Activated T-helper 2 cell treated with anti-CD3 and anti-CD28 coated beads, Interferon-gamma antibody, Interleukin-2, Interleukin-4, amounts not matched to agents 10 μg/mL and 5 μg/mL and 100 μg/mL, durations not matched to agents 14 hours and 24 hours and 36 hours (primary cell): ENCODE measurements at regions of chr2 and their contacts with region 1.

Region 1: GRCh38 chr2:12456293-12457151 is 260.2 kb upstream of the TRIB2 start:
- DNase-seq: peak; percentile 54
- H3K4me3 Mint-ChIP-seq: peak overlapping the region; percentile 61
- H3K27ac Mint-ChIP-seq: peak overlapping the region; percentile 74
- H3K4me1 Mint-ChIP-seq: peaks cover 42% of the 10 kb centered on the region
- H3K27me3 Mint-ChIP-seq: no peaks in the 10 kb centered on the region

Region 2: DNA sequence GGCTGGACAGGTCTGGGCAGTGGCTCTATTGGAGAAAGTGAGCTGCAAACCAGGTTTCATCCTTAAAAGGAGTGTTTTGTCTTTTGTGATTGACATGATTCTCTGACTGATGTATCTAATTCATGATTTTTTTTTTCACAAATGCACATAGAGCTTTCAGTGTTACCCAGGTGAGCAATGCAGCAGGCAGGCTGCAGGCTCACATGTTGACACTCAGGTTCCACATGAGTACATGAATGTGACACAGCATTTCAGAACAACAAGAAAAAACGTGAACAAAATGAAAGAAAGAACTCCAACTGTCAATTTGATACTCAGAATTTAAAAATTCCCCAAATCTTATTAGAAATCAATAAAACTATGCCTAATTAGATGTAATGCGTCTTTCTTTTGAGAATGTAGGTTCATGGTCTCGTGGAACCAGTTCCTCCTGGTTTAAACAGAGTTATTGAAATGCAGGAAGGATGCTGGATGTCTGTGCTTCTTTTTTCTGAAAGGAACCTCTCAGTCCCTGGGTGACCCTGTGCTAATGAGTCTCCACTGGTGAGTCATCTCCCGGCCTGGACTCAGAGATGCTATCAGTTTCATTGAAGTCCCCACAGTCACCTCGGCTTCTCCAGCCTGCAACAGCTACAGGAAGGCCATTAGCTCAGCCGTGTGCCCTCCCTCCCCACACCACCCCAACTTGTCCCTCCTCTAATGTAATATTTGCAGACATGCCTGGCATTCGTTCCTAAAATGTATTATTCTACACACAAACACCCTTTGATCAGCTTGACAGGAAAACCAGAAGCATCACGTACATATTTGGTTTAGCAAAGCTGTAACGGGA is 279.7 kb before region 1 on chr2:
- intact Hi-C with region 1: no loop called
- DNase-seq: no peak
- H3K4me3 Mint-ChIP-seq: no peak overlapping the region
- H3K27ac Mint-ChIP-seq: no peak overlapping the region
- H3K4me1 Mint-ChIP-seq: peaks cover 24% of the 10 kb centered on the region
- H3K27me3 Mint-ChIP-seq: peaks cover 14% of the 10 kb centered on the region

Region 3: GRCh38 chr2:12435430-12436222 is 20.9 kb before region 1 on chr2:
- intact Hi-C with region 1: loop called (anchors 2 kb)
- DNase-seq: no peak
- H3K4me3 Mint-ChIP-seq: no peak overlapping the region
- H3K27ac Mint-ChIP-seq: no peak overlapping the region
- H3K4me1 Mint-ChIP-seq: peaks cover 37% of the 10 kb centered on the region
- H3K27me3 Mint-ChIP-seq: no peaks in the 10 kb centered on the region

Region 4: GRCh38 chr2:12486205-12487118 is 29.9 kb after region 1 on chr2:
- intact Hi-C with region 1: loop called (anchors 5 kb)
- DNase-seq: no peak
- H3K4me3 Mint-ChIP-seq: no peak overlapping the region
- H3K27ac Mint-ChIP-seq: no peak overlapping the region
- H3K4me1 Mint-ChIP-seq: peaks cover 53% of the 10 kb centered on the region
- H3K27me3 Mint-ChIP-seq: no peaks in the 10 kb centered on the region